Esophagus muscularis mucosa (tissue), 4 donors: ENCODE measurements at regions of chr13 and their contacts with region 1.

Region 1: GRCh38 chr13:91313103-91313502 is 34.4 kb upstream of the MIR17HG start:
- DNase-seq: no peak
- H3K4me3 ChIP-seq: peak overlapping the region in 1 of 4 donors; percentile 20
- H3K27ac ChIP-seq: no peak overlapping the region
- H3K4me1 ChIP-seq: peaks cover 0 to 2% (median 0%) of the 10 kb centered on the region in 4 donors
- H3K27me3 ChIP-seq: peaks cover 0 to 42% (median 2%) of the 10 kb centered on the region in 4 donors
- CTCF ChIP-seq: peak; percentile 43 to 72 (median 50)
- EP300 ChIP-seq: no peak
- POLR2A ChIP-seq: no peak

Region 2: GRCh38 chr13:91212231-91212630 is 100.9 kb before region 1 on chr13:
- intact Hi-C with region 1: no loop called
- DNase-seq: no peak
- H3K4me3 ChIP-seq: no peak overlapping the region
- H3K27ac ChIP-seq: no peak overlapping the region
- H3K4me1 ChIP-seq: no peaks in the 10 kb centered on the region
- H3K27me3 ChIP-seq: peaks cover 0 to 4% (median 0%) of the 10 kb centered on the region in 4 donors
- CTCF ChIP-seq: no peak
- EP300 ChIP-seq: no peak
- POLR2A ChIP-seq: no peak

Region 3: GRCh38 chr13:91348906-91349435 is 35.9 kb after region 1 on chr13:
- intact Hi-C with region 1: loop called (anchors 5 kb)
- DNase-seq: peak; percentile 97
- H3K4me3 ChIP-seq: peak overlapping the region; percentile 94 to 97 (median 94)
- H3K27ac ChIP-seq: peak overlapping the region; percentile 94 to 97 (median 96)
- H3K4me1 ChIP-seq: peaks cover 22 to 40% (median 30%) of the 10 kb centered on the region in 4 donors
- H3K27me3 ChIP-seq: peaks cover 0 to 4% (median 0%) of the 10 kb centered on the region in 4 donors
- CTCF ChIP-seq: peak; percentile 92 to 100 (median 97)
- EP300 ChIP-seq: no peak
- POLR2A ChIP-seq: no peak